Activated CD4-positive, alpha-beta memory T cell treated with anti-CD3 and anti-CD28 coated beads for 36 hours (primary cell): ENCODE measurements at regions of chr2 and their contacts with region 1.

Region 1: GRCh38 chr2:70616168-70616694 is 62.6 kb upstream of the TGFA start:
- DNase-seq: no peak
- H3K4me3 Mint-ChIP-seq: no peak overlapping the region
- H3K27ac Mint-ChIP-seq: no peak overlapping the region
- H3K4me1 Mint-ChIP-seq: no peaks in the 10 kb centered on the region
- H3K27me3 Mint-ChIP-seq: no peaks in the 10 kb centered on the region

Region 2: DNA sequence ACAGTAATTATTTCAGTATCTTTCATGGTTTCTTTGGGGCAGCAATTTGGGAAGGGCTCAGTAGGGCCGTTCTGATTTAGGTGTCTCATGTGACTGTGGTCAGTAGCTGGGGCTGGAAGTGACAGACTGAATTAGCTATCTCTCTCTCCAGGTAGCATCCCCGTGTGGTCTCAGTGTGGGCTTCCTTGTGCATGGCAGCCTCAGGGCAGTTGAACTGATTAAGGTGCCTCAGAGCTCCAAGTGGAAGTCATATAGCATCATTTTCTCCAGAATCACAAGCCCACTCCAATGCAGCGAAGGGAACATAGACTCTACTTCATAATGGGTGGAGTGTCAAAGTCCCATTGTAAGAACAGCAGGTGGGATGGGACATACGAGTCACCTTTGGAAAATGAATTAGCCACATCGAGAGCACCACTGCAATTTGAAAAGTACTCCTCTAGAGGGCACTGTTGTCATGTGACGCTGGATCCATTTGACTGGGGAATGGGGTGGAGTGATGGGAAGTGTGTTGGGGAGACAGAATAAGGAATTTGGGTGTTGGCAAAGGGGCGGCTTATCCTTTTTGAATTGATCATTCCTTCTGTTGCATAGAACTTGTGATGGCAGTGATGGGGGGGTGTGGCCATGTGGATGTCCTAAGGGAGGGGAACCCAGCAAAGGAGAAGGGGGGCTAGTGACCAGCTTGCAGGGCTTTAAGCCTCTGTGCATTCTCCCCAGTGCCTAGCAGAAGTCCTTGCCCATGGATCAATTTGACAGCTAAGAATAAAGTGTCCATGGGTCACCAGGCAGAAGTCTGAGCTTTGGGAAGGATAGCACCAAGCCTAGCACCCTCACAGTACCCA is 275.1 kb before region 1 on chr2:
- CTCF ChIA-PET with region 1: interaction called, 99 read pairs
- POLR2A ChIA-PET with region 1: interaction called, 8 read pairs
- intact Hi-C with region 1: loop called (anchors 1 kb)
- DNase-seq: peak; percentile 44
- H3K4me3 Mint-ChIP-seq: no peak overlapping the region
- H3K27ac Mint-ChIP-seq: no peak overlapping the region
- H3K4me1 Mint-ChIP-seq: no peaks in the 10 kb centered on the region
- H3K27me3 Mint-ChIP-seq: peaks cover 1% of the 10 kb centered on the region

Region 3: GRCh38 chr2:70553584-70554337 is 62.5 kb before region 1 on chr2 and contains the start of gene TGFA:
- CTCF ChIA-PET with region 1: interaction called, 8 read pairs
- POLR2A ChIA-PET with region 1: no interaction called
- intact Hi-C with region 1: loop called (anchors 5 kb)
- DNase-seq: peak; percentile 77
- H3K4me3 Mint-ChIP-seq: peak within 1 kb of the TSS; percentile 75
- H3K27ac Mint-ChIP-seq: no peak within 1 kb of the TSS
- H3K4me1 Mint-ChIP-seq: peaks cover 20% of the 10 kb centered on the region
- H3K27me3 Mint-ChIP-seq: peaks cover 17% of the 10 kb centered on the region
- total RNA-seq, gene TGFA: 0.50 to 0.58 TPM

Region 4: GRCh38 chr2:70641263-70641784 is 25.1 kb after region 1 on chr2:
- CTCF ChIA-PET with region 1: interaction called, 29 read pairs
- POLR2A ChIA-PET with region 1: no interaction called
- intact Hi-C with region 1: no loop called
- DNase-seq: peak; percentile 31
- H3K4me3 Mint-ChIP-seq: no peak overlapping the region
- H3K27ac Mint-ChIP-seq: no peak overlapping the region
- H3K4me1 Mint-ChIP-seq: peaks cover 32% of the 10 kb centered on the region
- H3K27me3 Mint-ChIP-seq: no peaks in the 10 kb centered on the region

Region 5: GRCh38 chr2:70647873-70648481 is 31.7 kb after region 1 on chr2:
- CTCF ChIA-PET with region 1: interaction called, 29 read pairs
- POLR2A ChIA-PET with region 1: no interaction called
- intact Hi-C with region 1: loop called (anchors 1 kb)
- DNase-seq: peak; percentile 83
- H3K4me3 Mint-ChIP-seq: no peak overlapping the region
- H3K27ac Mint-ChIP-seq: no peak overlapping the region
- H3K4me1 Mint-ChIP-seq: no peaks in the 10 kb centered on the region
- H3K27me3 Mint-ChIP-seq: no peaks in the 10 kb centered on the region

Region 6: GRCh38 chr2:70664525-70664924 is 48.3 kb after region 1 on chr2:
- CTCF ChIA-PET with region 1: no interaction called
- POLR2A ChIA-PET with region 1: no interaction called
- intact Hi-C with region 1: no loop called
- DNase-seq: peak; percentile 33
- H3K4me3 Mint-ChIP-seq: no peak overlapping the region
- H3K27ac Mint-ChIP-seq: no peak overlapping the region
- H3K4me1 Mint-ChIP-seq: peaks cover 12% of the 10 kb centered on the region
- H3K27me3 Mint-ChIP-seq: no peaks in the 10 kb centered on the region

Region 7: DNA sequence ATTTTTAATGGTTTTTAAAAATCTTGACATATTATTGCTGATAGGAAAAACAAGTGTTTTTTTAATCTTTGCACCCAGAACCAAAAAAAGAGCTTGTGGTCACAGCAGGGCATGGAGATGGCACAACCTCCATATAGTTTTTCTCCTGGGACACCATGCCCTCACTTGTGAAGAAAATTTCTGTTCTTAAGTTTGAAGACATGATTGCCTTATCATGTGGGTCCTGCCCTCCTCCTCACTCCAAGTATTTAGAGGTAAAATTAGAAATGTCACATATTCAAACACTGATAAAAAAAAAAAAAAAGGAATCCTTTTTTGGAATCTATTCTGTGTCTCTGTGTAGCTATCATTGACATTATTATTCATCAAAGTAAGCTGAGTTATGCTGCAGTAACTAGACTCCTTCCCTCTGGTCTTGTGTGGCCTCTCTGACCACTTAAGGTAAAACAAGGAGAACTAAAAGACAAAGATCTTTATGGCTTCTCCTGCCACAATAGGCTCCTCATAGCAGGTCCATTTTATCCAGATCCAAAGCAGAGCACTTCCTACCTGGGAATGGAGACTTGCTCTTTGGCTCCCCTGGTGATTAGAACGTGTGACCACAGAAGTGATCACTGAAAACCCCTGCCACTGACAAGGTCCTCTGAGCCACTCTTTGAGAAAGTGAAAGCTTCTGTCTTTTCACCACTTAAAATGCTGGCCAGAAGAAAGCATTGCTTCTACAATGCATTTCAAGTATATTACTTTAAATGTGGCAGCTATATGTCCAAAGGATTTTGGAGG is 132.0 kb after region 1 on chr2:
- CTCF ChIA-PET with region 1: no interaction called
- POLR2A ChIA-PET with region 1: no interaction called
- intact Hi-C with region 1: no loop called
- DNase-seq: no peak
- H3K4me3 Mint-ChIP-seq: no peak overlapping the region
- H3K27ac Mint-ChIP-seq: no peak overlapping the region
- H3K4me1 Mint-ChIP-seq: no peaks in the 10 kb centered on the region
- H3K27me3 Mint-ChIP-seq: peaks cover 15% of the 10 kb centered on the region